Caco-2 (cell line): ENCODE measurements at regions of chr11 and their contacts with region 1.

Region 1: DNA sequence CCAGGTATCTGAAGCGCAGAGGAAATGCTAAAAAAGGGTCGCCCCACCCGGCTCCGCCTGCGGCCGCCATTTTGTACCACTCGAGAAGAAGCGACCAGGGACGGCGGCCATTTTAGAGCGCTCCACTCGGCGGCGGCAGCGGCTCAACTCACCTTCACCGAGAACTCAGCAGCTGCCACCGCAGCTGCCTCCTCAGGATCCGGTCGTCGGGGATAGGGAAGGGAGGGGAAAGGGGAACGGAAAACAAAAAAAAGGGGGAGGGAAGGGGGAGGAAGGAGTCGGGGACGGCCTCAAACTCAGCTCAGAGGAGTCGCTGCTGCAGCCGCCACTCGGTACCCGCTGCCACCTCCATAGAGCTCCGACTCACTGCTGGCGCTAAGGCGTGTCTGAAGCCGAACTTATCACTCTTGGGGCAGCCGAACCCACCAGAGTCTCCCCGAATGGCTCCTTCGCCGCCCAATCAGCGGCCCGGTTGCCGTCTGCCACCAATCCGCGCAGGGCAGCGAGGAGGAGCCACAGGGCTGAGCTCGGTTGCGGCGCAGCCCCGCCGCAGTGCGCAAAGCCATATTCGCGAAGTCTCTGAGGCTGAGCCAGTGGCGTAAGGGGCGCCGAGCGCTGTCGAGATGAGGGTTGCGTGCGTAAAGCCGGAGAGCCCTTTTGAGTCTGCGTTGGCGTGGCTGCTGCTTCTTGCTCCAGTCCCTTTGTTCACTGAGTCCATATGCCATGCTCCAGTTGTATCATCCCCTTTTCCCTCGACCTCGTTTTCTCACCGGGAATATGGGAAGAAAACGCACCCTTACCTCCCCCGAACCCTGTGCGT is at the start of gene EIF4G2:
- DNase-seq: peak; percentile 98 to 99
- H3K4me3 ChIP-seq: peak within 1 kb of the TSS; percentile 92
- H3K4me3 Mint-ChIP-seq: peak within 1 kb of the TSS; percentile 98
- H3K27ac Mint-ChIP-seq: peak within 1 kb of the TSS; percentile 97
- H3K4me1 ChIP-seq: peaks cover 11% of the 10 kb centered on the region
- H3K4me1 Mint-ChIP-seq: peaks cover 11% of the 10 kb centered on the region
- H3K27me3 ChIP-seq: no peaks in the 10 kb centered on the region
- H3K27me3 Mint-ChIP-seq: no peaks in the 10 kb centered on the region
- CTCF ChIP-seq: no peak
- total RNA-seq, gene EIF4G2: 1,233 and 1,287 TPM in 2 replicates

Region 2: DNA sequence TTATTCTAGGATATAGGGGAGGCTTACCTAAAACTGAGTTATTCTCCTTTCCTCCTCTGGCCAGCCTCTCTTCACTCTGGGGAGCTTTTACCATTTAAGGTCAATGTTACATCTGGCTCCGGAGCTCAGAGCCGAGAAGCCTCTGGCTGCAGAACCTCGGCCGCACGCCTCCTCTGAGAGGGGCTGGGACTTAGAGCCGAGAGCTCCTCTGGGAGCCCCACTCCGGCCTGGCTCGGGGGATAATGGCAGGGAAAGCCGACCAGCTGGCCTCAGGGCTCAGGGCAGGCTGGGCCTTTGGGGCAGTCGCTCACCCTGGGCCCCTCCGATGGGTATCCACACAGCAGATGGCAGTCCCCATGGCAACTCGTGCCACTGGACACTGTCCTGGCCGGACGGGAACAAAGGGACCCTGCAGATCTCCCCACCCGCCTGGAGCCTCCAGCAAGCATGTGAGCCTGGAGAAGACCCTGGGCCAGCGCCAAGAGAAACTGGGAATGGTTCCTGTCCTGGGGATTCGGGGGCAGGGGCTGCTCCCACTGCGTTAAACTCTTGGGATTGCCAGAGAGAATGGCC is 115.2 kb before region 1 on chr11 and contains the start of gene IRAG1:
- CTCF ChIA-PET with region 1: no interaction called
- POLR2A ChIA-PET with region 1: no interaction called
- intact Hi-C with region 1: no loop called
- DNase-seq: no peak
- H3K4me3 ChIP-seq: no peak within 1 kb of the TSS
- H3K4me3 Mint-ChIP-seq: no peak within 1 kb of the TSS
- H3K27ac Mint-ChIP-seq: no peak within 1 kb of the TSS
- H3K4me1 ChIP-seq: no peaks in the 10 kb centered on the region
- H3K4me1 Mint-ChIP-seq: peaks cover 5% of the 10 kb centered on the region
- H3K27me3 ChIP-seq: no peaks in the 10 kb centered on the region
- H3K27me3 Mint-ChIP-seq: no peaks in the 10 kb centered on the region
- CTCF ChIP-seq: no peak
- total RNA-seq, gene IRAG1: 0.35 and 0.64 TPM in 2 replicates

Region 3: DNA sequence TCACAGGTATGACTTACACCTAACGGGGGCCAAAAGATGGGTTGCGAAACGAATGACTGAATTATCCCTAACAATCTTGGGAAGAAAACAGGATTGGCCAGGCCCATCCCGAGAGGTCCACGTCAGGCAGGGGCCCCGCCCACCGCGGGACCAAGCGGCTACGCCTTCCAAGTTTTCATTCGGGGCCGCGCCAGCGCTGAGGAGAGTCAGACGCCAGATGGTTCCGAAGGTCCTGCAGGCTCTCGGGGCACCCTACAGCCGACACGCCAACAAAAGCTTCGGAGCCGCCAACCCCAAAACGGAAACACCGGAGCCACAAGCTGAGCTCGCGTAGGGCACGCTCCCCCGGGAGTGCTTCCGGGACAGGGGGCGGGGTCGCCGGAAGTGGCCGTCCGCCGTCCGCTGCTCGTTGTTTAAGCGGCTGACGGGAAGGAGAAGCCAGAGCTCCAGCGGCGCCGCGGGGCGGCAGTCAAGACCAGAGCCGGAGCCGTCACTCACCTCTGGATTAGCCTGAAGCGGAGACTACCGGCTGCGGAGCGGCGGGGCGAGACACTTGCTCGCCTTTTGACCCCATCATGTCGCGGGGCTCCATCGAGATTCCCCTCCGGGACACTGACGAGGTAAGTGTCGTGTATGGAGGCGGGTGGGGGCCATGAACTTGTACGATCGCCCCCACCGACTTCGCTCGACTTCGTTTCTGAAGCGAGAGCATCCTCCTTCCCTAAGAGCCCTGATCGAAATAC is 57.8 kb before region 1 on chr11 and contains the start of gene CTR9:
- CTCF ChIA-PET with region 1: no interaction called
- POLR2A ChIA-PET with region 1: interaction called, 30 read pairs
- intact Hi-C with region 1: loop called (anchors 5 kb)
- DNase-seq: peak; percentile 96 to 97
- H3K4me3 ChIP-seq: peak within 1 kb of the TSS; percentile 70
- H3K4me3 Mint-ChIP-seq: peak within 1 kb of the TSS; percentile 91
- H3K27ac Mint-ChIP-seq: peak within 1 kb of the TSS; percentile 90
- H3K4me1 ChIP-seq: peaks cover 13% of the 10 kb centered on the region; the same call in 1 of the 2 replicates
- H3K4me1 Mint-ChIP-seq: peaks cover 6% of the 10 kb centered on the region
- H3K27me3 ChIP-seq: no peaks in the 10 kb centered on the region
- H3K27me3 Mint-ChIP-seq: no peaks in the 10 kb centered on the region
- CTCF ChIP-seq: peak in 1 of 2 experiments; percentile 50
- total RNA-seq, gene CTR9: 51.1 and 54.0 TPM in 2 replicates

Region 4: GRCh38 chr11:10797531-10797930 is 11.2 kb before region 1 on chr11:
- CTCF ChIA-PET with region 1: interaction called, 28 read pairs
- POLR2A ChIA-PET with region 1: interaction called, 49 read pairs
- intact Hi-C with region 1: no loop called
- DNase-seq: no peak
- H3K4me3 ChIP-seq: no peak overlapping the region
- H3K4me3 Mint-ChIP-seq: no peak overlapping the region
- H3K27ac Mint-ChIP-seq: no peak overlapping the region
- H3K4me1 ChIP-seq: no peaks in the 10 kb centered on the region
- H3K4me1 Mint-ChIP-seq: peaks cover 6% of the 10 kb centered on the region
- H3K27me3 ChIP-seq: no peaks in the 10 kb centered on the region
- H3K27me3 Mint-ChIP-seq: no peaks in the 10 kb centered on the region
- CTCF ChIP-seq: no peak

Region 5: DNA sequence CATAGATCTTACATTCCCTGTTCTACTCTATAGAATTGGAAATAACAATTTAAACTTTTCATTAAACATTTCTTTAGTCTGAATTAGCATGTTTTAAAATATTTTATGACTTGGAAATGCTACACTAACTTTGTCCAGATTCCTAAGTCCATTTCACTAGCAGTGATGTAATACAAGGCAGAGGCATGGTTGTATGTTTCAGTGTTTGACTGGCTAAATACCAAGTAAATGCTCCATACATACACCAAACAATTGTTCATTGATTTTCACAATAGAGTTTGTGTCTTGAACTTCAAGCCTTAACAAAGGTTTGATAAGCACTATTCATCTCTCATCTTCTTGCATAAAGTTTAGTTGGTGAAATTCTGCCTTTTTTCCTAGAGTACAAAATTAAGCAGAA is 35.6 kb after region 1 on chr11:
- CTCF ChIA-PET with region 1: interaction called, 9 read pairs
- POLR2A ChIA-PET with region 1: interaction called, 32 read pairs
- intact Hi-C with region 1: loop called (anchors 1 kb)
- DNase-seq: no peak
- H3K4me3 ChIP-seq: no peak overlapping the region
- H3K4me3 Mint-ChIP-seq: no peak overlapping the region
- H3K27ac Mint-ChIP-seq: no peak overlapping the region
- H3K4me1 ChIP-seq: peaks cover 29% of the 10 kb centered on the region
- H3K4me1 Mint-ChIP-seq: peaks cover 11% of the 10 kb centered on the region
- H3K27me3 ChIP-seq: no peaks in the 10 kb centered on the region
- H3K27me3 Mint-ChIP-seq: no peaks in the 10 kb centered on the region
- CTCF ChIP-seq: no peak

Region 6: DNA sequence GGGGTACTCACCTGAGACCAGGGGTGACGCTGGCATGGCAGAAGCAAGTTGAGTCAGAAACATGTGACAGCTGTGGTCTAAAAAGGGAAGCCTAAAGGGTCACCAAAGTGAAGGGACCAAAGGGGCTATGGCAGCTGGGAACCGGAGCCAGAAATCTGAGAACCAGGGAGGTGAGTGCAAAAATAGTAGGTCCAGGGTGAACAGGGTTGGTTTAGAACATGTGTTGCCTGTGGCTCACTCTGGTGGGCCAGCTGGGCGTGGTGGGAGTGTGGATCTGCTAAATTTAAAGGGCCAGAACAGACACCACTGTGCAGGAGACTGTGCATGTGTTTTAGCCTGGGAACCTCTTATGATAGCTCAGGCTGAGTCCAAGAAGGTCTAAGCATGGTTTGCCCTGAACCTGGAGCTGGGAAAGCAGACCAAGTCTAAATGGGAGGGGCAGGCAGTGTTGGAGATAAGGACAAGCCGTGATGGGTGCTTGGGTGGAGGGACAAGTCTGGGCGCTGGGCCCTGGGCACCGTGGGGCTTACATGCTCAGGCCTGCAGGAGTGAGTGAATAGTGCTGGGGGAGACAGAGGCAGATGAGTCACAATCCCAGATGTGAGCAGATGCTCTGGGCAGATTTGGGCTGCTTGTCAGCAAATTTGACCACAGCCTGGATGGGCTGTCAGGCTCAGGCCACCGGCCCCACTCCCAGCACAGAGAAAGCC is 90.5 kb after region 1 on chr11:
- CTCF ChIA-PET with region 1: interaction called, 11 read pairs
- POLR2A ChIA-PET with region 1: interaction called, 46 read pairs
- intact Hi-C with region 1: loop called (anchors 2 kb)
- DNase-seq: peak in 1 of 2 experiments; percentile 74
- H3K4me3 ChIP-seq: no peak overlapping the region
- H3K4me3 Mint-ChIP-seq: peak overlapping the region; percentile 55
- H3K27ac Mint-ChIP-seq: peak overlapping the region; percentile 86
- H3K4me1 ChIP-seq: peaks cover 39% of the 10 kb centered on the region
- H3K4me1 Mint-ChIP-seq: peaks cover 58% of the 10 kb centered on the region
- H3K27me3 ChIP-seq: no peaks in the 10 kb centered on the region
- H3K27me3 Mint-ChIP-seq: no peaks in the 10 kb centered on the region
- CTCF ChIP-seq: no peak

Region 7: GRCh38 chr11:10975287-10975721 is 166.5 kb after region 1 on chr11:
- CTCF ChIA-PET with region 1: no interaction called
- POLR2A ChIA-PET with region 1: interaction called, 12 read pairs
- intact Hi-C with region 1: no loop called
- DNase-seq: peak; percentile 77 to 80
- H3K4me3 ChIP-seq: no peak overlapping the region
- H3K4me3 Mint-ChIP-seq: peak overlapping the region; percentile 40
- H3K27ac Mint-ChIP-seq: peak overlapping the region; percentile 67
- H3K4me1 ChIP-seq: peaks cover 48% of the 10 kb centered on the region
- H3K4me1 Mint-ChIP-seq: peaks cover 32% of the 10 kb centered on the region
- H3K27me3 ChIP-seq: no peaks in the 10 kb centered on the region
- H3K27me3 Mint-ChIP-seq: no peaks in the 10 kb centered on the region
- CTCF ChIP-seq: no peak

Region 8: DNA sequence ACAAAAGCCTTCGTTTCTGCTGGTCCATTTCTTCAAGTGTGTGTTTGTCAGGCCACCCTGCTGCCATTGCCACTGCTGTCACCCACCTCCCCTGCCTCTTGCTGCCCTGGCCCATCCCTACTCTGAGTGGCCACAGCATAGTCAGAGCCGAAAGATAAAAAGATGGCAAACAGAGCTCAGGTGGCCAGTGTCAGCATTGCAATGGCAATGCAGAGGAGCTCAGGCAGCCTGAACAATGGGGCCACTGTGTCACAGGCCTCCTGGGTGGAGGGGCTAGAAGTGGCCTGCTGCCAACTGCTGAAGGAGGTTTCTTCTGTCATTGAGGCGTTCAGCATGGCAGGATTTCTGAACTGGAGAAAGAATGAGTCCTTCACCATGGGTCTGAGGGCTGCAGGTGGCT is 407.2 kb after region 1 on chr11:
- CTCF ChIA-PET with region 1: no interaction called
- POLR2A ChIA-PET with region 1: no interaction called
- intact Hi-C with region 1: no loop called
- DNase-seq: no peak
- H3K4me3 ChIP-seq: no peak overlapping the region
- H3K4me3 Mint-ChIP-seq: no peak overlapping the region
- H3K27ac Mint-ChIP-seq: no peak overlapping the region
- H3K4me1 ChIP-seq: no peaks in the 10 kb centered on the region
- H3K4me1 Mint-ChIP-seq: no peaks in the 10 kb centered on the region
- H3K27me3 ChIP-seq: no peaks in the 10 kb centered on the region; the same call in 1 of the 2 replicates
- H3K27me3 Mint-ChIP-seq: peaks cover 12% of the 10 kb centered on the region
- CTCF ChIP-seq: no peak